Activated B cell treated with CpG ODN at 0.5 μM for 24 hours (primary cell): ENCODE measurements at regions of chr1 and their contacts with region 1.

Region 1: DNA sequence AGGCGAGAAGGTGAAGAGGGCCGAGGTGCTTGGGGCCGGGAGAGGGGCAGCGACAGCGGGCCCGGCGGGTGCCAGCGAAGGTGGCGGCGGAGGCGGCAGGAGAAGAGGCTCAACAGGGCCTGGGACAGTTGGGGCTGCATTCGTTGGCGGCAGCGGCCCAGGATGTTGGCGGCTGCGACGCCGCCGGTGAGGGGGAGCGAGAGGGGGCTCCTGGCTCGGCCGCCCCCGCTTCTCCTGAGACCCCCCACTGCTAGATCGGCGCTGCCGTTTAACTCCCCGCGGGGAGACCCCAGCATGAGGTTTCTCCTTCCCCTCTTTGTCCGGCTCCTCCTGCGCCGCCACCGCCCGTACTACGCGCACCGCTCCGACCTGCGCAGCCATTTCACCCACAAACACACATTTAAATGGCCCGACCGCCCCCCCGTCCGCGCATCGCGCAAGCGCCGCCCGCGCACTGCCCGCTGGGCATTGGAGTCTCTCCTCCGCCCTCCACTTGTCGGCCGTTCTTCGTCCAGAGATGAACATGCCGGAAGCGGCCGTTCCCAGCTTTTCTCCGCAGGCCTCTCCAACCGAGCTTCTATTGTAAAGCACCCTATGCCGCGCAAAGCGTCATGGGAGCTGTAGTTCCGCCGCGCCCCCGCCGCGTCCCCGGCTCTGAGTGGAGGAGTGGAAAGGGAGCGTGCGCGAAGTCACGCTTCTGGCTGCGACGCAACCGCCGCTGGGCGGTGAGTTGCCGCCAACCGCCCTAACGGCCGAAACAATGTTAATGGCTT is at the start of gene RSBN1:
- DNase-seq: peak; percentile 95
- ATAC-seq: peak; percentile 94
- H3K4me3 Mint-ChIP-seq: peak within 1 kb of the TSS; percentile 94
- H3K27ac Mint-ChIP-seq: peak within 1 kb of the TSS; percentile 93
- H3K4me1 Mint-ChIP-seq: peaks cover 41% of the 10 kb centered on the region
- H3K27me3 Mint-ChIP-seq: no peaks in the 10 kb centered on the region
- CTCF ChIP-seq: no peak
- total RNA-seq, gene RSBN1: 26.4 and 29.1 TPM in 2 replicates

Region 2: DNA sequence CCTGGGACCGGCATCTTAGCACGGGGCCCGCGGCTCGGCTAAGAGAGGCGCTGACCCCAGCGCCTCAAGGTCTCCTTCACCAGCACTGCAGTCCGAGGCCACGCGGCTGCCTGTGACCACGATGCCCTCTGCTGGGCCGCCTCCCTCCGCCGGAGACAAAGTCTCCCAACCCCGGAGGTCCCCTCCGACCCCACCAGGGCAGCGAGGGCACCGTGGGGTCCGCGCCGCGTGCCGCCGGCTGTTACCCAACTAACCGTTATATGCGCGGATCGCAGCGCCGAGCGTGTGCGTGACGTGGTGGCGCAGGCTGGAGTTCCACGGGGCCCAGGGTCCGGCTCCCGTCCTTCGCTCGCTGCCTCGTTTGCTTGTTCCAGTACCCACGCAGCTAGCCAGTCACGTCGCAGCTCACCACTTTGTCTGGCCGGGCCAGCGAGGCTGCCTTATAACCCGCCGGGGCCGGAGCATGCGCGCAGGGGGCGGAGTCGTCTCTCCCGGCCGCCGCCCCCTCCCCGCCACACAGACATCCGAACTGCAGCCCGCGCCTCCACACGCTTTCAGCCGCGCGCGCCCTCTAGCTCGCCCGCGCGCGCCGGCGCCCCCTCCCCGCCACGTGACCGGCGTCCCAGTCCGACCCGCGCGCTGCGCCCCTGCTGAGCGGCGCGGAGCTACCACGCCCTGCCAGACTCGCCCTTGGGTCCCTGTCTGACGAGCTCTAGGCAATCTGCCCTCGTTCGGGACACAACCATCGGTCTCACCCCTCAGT is 856.1 kb before region 1 on chr1 and contains the start of gene SLC16A1:
- CTCF ChIA-PET with region 1: no interaction called
- POLR2A ChIA-PET with region 1: no interaction called
- intact Hi-C with region 1: loop called (anchors 2 kb)
- DNase-seq: peak; percentile 89
- ATAC-seq: peak; percentile 82
- H3K4me3 Mint-ChIP-seq: peak within 1 kb of the TSS; percentile 98
- H3K27ac Mint-ChIP-seq: peak within 1 kb of the TSS; percentile 98
- H3K4me1 Mint-ChIP-seq: peaks cover 49% of the 10 kb centered on the region
- H3K27me3 Mint-ChIP-seq: no peaks in the 10 kb centered on the region
- CTCF ChIP-seq: no peak
- total RNA-seq, gene SLC16A1: 17.8 and 17.9 TPM in 2 replicates

Region 3: DNA sequence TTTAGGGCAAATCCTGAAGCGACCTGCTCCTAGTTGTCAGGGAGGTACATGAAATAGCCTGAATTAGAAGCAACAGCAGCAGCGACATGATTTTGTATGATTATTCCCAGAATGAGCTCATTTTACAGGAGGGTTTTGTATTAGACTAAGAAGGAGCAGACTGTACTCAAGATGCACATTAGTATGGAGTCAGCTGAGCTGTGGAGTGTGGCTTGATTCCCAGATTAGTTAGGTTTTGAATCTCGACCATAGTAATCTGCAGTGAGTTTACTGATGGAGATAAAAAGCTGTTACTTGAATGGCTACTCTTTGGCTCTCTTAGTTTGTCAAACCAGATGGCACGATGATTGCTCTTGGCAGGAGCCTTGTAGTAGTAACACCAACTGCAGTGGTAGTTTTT is 195.9 kb before region 1 on chr1:
- CTCF ChIA-PET with region 1: no interaction called
- POLR2A ChIA-PET with region 1: no interaction called
- intact Hi-C with region 1: no loop called
- DNase-seq: no peak
- ATAC-seq: no peak
- H3K4me3 Mint-ChIP-seq: no peak overlapping the region
- H3K27ac Mint-ChIP-seq: no peak overlapping the region
- H3K4me1 Mint-ChIP-seq: no peaks in the 10 kb centered on the region
- H3K27me3 Mint-ChIP-seq: peaks cover 3% of the 10 kb centered on the region
- CTCF ChIP-seq: no peak

Region 4: DNA sequence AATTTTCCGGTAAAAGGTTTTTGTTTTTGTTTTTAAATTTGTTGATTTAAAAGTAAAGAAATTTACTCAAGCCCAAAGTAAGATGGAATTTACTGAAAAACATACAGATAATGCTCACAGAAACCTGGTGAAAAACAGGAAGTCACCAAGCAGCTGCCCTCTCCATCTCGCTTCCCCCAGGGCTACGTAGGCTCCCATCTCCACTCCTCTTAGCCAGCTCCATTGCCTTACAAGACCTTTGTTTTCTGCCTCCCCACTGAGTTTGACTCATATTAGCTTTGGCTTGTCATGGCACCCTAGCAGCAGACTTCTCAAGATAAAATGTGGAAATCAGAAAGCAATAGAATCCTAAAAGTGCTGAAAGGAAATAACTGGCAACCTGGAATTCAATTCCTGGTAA is 110.6 kb before region 1 on chr1:
- CTCF ChIA-PET with region 1: no interaction called
- POLR2A ChIA-PET with region 1: no interaction called
- intact Hi-C with region 1: no loop called
- DNase-seq: no peak
- ATAC-seq: peak; percentile 42
- H3K4me3 Mint-ChIP-seq: no peak overlapping the region
- H3K27ac Mint-ChIP-seq: no peak overlapping the region
- H3K4me1 Mint-ChIP-seq: peaks cover 20% of the 10 kb centered on the region
- H3K27me3 Mint-ChIP-seq: no peaks in the 10 kb centered on the region
- CTCF ChIP-seq: no peak

Region 5: DNA sequence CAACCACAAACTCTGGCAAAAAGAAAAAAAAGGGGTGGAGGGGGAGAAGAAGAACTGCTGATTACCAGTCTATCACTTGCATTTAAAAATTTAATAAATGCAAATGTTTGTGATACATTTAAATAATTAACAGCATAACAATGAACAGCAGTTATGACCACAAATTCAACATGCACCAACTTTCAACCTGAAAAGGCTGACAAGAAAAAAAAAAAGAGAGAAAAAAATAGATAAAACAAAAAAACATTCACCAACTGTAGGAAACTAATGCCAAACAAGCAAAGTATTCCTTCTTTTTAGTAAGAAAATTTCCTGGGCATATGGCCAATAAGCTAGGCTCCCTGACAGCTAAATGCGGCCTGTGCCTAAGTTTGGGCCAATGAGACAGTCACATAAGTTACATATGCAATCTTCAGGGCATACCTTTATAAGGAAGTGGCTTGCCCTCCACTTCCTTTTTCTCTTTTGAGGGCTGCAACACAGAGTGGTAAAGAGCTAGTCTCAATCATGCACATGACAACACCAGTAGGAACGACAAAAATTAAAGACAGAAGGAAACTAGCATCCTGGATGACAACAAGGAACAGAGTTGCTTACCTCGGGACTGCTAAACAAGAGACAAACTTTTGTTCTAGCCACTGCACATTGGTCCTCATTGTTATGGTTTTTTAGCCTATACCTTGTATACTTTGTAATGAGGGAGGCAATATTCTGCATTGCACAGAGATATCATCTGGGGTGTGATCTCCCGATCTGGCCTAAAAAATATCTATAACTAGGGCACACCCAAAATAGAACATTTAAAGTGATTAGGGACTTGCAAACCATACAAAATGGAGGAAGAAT is 28.6 kb before region 1 on chr1:
- CTCF ChIA-PET with region 1: no interaction called
- POLR2A ChIA-PET with region 1: interaction called, 3 read pairs
- intact Hi-C with region 1: loop called (anchors 1 kb)
- DNase-seq: no peak
- ATAC-seq: peak; percentile 99
- H3K4me3 Mint-ChIP-seq: peak overlapping the region; percentile 5
- H3K27ac Mint-ChIP-seq: peak overlapping the region; percentile 59
- H3K4me1 Mint-ChIP-seq: peaks cover 32% of the 10 kb centered on the region
- H3K27me3 Mint-ChIP-seq: no peaks in the 10 kb centered on the region
- CTCF ChIP-seq: no peak

Region 6: GRCh38 chr1:113859478-113860175 is 47.6 kb after region 1 on chr1:
- CTCF ChIA-PET with region 1: no interaction called
- POLR2A ChIA-PET with region 1: interaction called, 10 read pairs
- intact Hi-C with region 1: loop called (anchors 1 kb)
- DNase-seq: no peak
- ATAC-seq: peak; percentile 84
- H3K4me3 Mint-ChIP-seq: peak overlapping the region; percentile 51
- H3K27ac Mint-ChIP-seq: peak overlapping the region; percentile 95
- H3K4me1 Mint-ChIP-seq: peaks cover 66% of the 10 kb centered on the region
- H3K27me3 Mint-ChIP-seq: no peaks in the 10 kb centered on the region
- CTCF ChIP-seq: no peak

Region 7: DNA sequence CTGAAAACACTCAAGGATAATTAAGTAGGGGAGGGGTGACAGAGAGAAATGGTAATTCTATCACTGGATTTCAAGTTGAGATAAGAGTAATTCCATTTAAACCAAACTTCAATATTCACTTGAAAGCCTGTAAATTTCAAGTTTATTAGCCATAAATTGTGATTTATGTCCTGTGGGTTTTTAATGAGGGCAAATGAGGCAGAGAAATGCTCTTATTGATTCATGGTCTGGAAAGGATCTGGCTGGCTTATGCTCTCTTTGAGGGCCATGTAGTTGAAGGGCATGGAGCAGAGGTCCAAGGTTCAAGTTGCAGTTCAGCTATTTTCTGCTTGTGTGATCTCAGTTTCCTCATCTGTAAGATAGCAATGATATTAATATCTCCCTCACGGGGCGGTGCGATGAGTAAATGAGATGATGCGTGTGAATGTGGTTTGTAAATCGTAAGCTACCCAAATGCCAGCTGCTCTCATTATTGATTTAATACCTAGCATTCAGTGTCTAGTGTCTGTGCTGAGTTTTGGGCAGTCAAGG is 179.5 kb after region 1 on chr1:
- CTCF ChIA-PET with region 1: no interaction called
- POLR2A ChIA-PET with region 1: no interaction called
- intact Hi-C with region 1: no loop called
- DNase-seq: no peak
- ATAC-seq: no peak
- H3K4me3 Mint-ChIP-seq: no peak overlapping the region
- H3K27ac Mint-ChIP-seq: no peak overlapping the region
- H3K4me1 Mint-ChIP-seq: peaks cover 7% of the 10 kb centered on the region
- H3K27me3 Mint-ChIP-seq: no peaks in the 10 kb centered on the region
- CTCF ChIP-seq: no peak

Region 8: GRCh38 chr1:114511032-114511785 is 699.1 kb after region 1 on chr1 and contains the start of gene TRIM33:
- CTCF ChIA-PET with region 1: no interaction called
- POLR2A ChIA-PET with region 1: interaction called, 4 read pairs
- intact Hi-C with region 1: loop called (anchors 1 kb)
- DNase-seq: peak; percentile 93
- ATAC-seq: peak; percentile 73
- H3K4me3 Mint-ChIP-seq: peak within 1 kb of the TSS; percentile 98
- H3K27ac Mint-ChIP-seq: peak within 1 kb of the TSS; percentile 99
- H3K4me1 Mint-ChIP-seq: peaks cover 48% of the 10 kb centered on the region
- H3K27me3 Mint-ChIP-seq: no peaks in the 10 kb centered on the region
- CTCF ChIP-seq: no peak
- total RNA-seq, gene TRIM33: 38.4 and 41.2 TPM in 2 replicates

Region 9: GRCh38 chr1:114780344-114781226 is 968.5 kb after region 1 on chr1 and contains the start of gene SIKE1:
- CTCF ChIA-PET with region 1: no interaction called
- POLR2A ChIA-PET with region 1: no interaction called
- intact Hi-C with region 1: loop called (anchors 1 kb)
- DNase-seq: peak; percentile 80
- ATAC-seq: peak; percentile 97
- H3K4me3 Mint-ChIP-seq: peak within 1 kb of the TSS; percentile 100
- H3K27ac Mint-ChIP-seq: peak within 1 kb of the TSS; percentile 97
- H3K4me1 Mint-ChIP-seq: peaks cover 28% of the 10 kb centered on the region
- H3K27me3 Mint-ChIP-seq: peaks cover 7% of the 10 kb centered on the region
- CTCF ChIP-seq: no peak
- total RNA-seq, gene SIKE1: 38.4 and 44.2 TPM in 2 replicates